ENCODE measurements at regions of chr19 and their contacts with region 1.

Region 1: GRCh38 chr19:36668646-36669045 is 2.0 kb upstream of the ZNF461 start:
- DNase-seq: no peak
- H3K4me3 ChIP-seq: peak overlapping the region in 1 of 4 experiments; percentile 93; a peak in 2 of 8 replicates
- H3K27ac ChIP-seq: no peak overlapping the region
- H3K4me1 ChIP-seq: peaks cover 0 to 2% (median under 1%) of the 10 kb centered on the region in 4 experiments; a peak in 1 of 7 replicates
- H3K27me3 ChIP-seq: no peaks in the 10 kb centered on the region
- CTCF ChIP-seq: no peak
- EP300 ChIP-seq: no peak
- POLR2A ChIP-seq: no peak
- RAD21 ChIP-seq: no peak

Region 2: DNA sequence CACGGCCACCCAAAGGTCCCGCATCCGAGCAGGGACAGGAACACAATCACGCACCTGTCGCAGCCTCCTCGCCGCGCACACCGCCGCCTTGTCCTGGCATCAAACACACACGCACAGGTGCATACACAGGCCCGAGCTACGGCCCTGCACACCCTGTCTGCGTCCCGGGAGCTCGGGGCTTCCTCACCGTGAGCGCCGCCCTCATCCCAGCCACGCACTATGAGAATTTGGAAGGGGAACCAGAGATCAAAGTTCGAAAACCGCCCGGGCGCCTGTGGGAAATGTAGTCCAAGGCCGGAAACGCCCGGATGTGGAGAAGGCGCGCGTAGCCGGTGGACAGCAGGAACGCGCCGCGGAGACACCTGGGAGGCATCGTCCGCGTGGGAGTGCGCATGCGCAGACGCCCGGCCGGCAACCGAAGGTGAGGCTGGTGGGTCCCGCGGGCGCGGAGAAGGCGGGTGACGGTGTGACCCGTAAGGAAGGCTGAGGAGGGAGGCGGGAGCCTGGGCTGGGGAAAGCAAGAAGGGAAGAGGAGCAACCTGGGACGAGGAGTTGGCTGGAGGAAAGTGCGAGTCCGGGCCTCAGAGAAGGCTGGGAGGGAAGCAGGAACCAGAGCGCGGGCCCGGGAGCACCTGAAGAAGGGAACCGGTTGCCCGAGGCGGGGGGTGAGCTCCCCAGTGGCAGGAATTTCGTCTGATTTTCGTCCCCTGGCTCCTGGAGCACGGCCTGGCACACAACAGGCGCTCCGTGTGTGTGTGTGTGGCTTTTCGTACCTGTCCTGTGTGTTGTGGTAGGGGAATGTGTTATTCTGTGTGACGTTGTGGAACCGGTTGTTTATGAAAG is 18.8 kb after region 1 on chr19 and contains the start of gene ZNF567:
- CTCF ChIA-PET with region 1: no interaction called
- POLR2A ChIA-PET with region 1: interaction called, 10 read pairs
- DNase-seq: peak; percentile 85 to 99
- H3K4me3 ChIP-seq: peak within 1 kb of the TSS; percentile 84 to 95 (median 92)
- H3K27ac ChIP-seq: peak within 1 kb of the TSS; percentile 87
- H3K4me1 ChIP-seq: no peaks in the 10 kb centered on the region; a peak in 3 of 7 replicates
- H3K27me3 ChIP-seq: no peaks in the 10 kb centered on the region
- CTCF ChIP-seq: no peak
- EP300 ChIP-seq: no peak
- POLR2A ChIP-seq: peak; percentile 81 to 86
- RAD21 ChIP-seq: no peak
- total RNA-seq, gene ZNF567: 10.5 and 10.6 TPM in 2 replicates

Region 3: DNA sequence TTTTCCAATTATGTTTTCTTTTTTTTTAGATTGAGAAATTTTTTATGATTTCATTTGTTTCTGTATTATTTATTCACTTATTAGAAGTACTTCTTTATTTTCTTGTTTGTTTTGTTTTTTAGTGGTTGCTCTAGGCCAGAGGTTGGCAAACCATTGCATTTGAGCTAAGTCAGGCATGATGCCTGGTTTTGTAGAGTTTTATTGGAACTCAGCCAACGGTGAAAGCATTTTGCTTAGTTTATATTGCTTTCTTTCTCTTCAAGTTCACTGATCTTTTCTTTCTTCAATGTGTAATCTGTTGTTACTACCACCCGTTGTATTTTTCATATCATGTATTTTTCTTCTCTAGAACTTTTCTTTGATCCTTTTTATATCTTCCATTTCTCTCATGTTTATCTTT is 38.5 kb after region 1 on chr19:
- CTCF ChIA-PET with region 1: no interaction called
- POLR2A ChIA-PET with region 1: no interaction called
- DNase-seq: no peak
- H3K4me3 ChIP-seq: no peak overlapping the region
- H3K27ac ChIP-seq: no peak overlapping the region
- H3K4me1 ChIP-seq: no peaks in the 10 kb centered on the region
- H3K27me3 ChIP-seq: no peaks in the 10 kb centered on the region
- CTCF ChIP-seq: no peak
- EP300 ChIP-seq: no peak
- POLR2A ChIP-seq: no peak
- RAD21 ChIP-seq: no peak

Measured in H1 (cell line).